ENCODE measurements at regions of chr20 and their contacts with region 1.

Region 1: DNA sequence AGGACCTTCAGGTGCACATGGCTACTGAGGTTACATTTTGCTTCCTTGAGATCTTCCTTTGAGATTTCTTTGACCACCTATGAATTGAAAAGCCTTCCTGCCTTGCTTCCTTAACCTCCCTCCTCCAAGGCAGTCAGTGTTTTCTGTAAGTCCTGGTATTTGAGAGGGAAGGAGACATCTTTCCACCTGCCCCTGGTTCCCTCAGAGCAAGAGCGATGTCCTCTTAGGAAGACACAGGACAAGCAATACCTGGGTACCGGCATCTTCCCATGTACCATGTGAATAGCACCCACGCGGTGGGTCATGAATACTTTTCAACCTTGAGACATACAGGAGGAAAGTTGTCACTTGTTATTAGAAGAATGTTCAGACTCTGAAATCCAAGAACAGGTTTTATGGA is 37.1 kb downstream of the GINS1 start:
- DNase-seq: no peak

Region 2: GRCh38 chr20:25508078-25508770 is 63.7 kb after region 1 on chr20:
- intact Hi-C with region 1: loop called (anchors 10 kb)
- DNase-seq: peak in 2 of 42 donors; percentile 37 to 55